GM18951 (cell line): ENCODE measurements at regions of chr15 and their contacts with region 1.

Region 1: GRCh38 chr15:74382004-74382816 is 14.8 kb upstream of the CYP11A1 start:
- POLR2A ChIP-seq: no peak

Region 2: GRCh38 chr15:74050556-74051234 is 331.5 kb before region 1 on chr15:
- in situ Hi-C with region 1: no loop called
- POLR2A ChIP-seq: no peak

Region 3: DNA sequence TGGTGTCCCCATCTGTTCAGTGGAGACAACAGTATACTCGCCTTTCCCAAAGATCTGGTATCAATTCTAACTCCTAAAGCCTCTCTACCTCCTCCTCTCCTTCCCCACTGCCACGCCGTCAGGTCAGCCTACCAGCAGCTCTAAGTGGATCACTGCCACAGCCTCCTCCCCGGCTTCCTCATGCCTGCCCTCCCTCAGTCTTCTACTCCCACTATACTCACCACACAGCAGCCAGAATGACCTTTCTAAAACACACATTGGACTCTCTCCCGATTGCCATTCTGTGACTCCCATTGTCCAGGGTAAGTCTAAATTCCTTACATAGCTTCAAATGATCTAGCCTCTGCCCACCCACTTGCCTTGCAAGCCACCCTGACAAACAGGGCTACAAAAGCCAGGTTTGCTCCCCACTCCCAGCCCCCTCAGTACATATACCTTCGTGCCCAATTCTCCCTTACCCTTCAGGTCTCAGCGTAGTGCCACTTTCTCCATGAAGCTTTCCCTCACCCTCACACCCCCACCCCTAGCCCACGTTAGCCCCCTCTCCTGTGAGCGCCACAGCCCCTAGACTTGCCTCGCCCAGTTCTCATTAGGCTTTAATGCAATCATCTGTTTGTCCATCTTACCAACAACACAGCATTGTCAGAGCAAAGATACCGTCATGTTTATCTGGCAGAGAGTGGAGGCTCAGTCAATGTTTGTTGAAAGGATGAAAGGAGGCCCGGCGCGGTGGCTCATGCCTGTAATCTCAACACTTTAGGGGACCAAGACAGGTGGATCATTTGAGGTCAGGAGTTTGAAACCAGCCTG is 61.1 kb after region 1 on chr15:
- in situ Hi-C with region 1: loop called (anchors 5 kb)
- POLR2A ChIP-seq: no peak